Common myeloid progenitor, CD34-positive (primary cell): ENCODE measurements at regions of chr2 and their contacts with region 1.

Region 1: DNA sequence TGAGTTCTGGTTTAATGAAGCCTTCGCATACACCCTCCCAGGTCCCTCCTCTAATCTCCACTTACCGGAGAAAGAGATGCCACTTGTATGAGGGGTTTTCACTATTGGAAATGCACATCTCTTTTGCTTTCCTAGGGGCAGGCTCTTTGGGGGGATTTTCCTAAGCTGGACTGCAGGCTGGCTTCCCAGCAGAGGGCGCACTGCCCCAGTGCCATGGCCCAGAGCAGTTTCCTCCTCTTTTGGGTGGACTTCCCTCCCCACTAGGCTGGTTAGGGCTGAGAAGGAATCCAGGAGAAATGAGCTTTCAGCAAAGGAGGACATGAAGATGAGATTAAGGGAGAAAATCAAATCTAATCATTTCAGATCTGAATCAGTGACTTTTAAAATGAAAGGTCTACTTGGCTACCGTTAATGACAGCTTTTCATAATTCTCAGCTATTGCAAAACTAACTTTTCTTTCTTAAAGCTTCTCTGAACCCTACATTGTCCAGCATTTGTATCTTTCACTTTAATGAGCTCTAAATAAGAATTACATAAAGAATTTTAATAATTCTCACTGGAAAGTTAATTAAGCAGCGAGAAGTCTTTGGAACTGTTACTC is 784.1 kb upstream of the FANCL start:
- DNase-seq: peak; percentile 61 to 67 (median 63)
- H3K4me3 ChIP-seq: peak overlapping the region in 3 of 7 experiments; percentile 5 to 59 (median 25)
- H3K27ac ChIP-seq: peak overlapping the region in 1 of 2 experiments; percentile 32
- H3K4me1 ChIP-seq: peaks cover 0 to 16% (median 4%) of the 10 kb centered on the region in 4 experiments
- H3K27me3 ChIP-seq: no peaks in the 10 kb centered on the region

Region 2: GRCh38 chr2:59044736-59045135 is 19.5 kb after region 1 on chr2:
- CTCF ChIA-PET with region 1: interaction called, 11 read pairs
- POLR2A ChIA-PET with region 1: interaction called, 4 read pairs
- DNase-seq: peak in 2 of 3 donors; percentile 50 to 67
- H3K4me3 ChIP-seq: no peak overlapping the region
- H3K27ac ChIP-seq: no peak overlapping the region
- H3K4me1 ChIP-seq: peaks cover 3 to 12% (median 8%) of the 10 kb centered on the region in 4 experiments
- H3K27me3 ChIP-seq: no peaks in the 10 kb centered on the region

Region 3: GRCh38 chr2:59182249-59182648 is 157.0 kb after region 1 on chr2:
- CTCF ChIA-PET with region 1: interaction called, 13 read pairs
- POLR2A ChIA-PET with region 1: no interaction called
- DNase-seq: peak; percentile 42 to 53 (median 44)
- H3K4me3 ChIP-seq: no peak overlapping the region
- H3K27ac ChIP-seq: no peak overlapping the region
- H3K4me1 ChIP-seq: peaks cover 4 to 15% (median 8%) of the 10 kb centered on the region in 4 experiments
- H3K27me3 ChIP-seq: no peaks in the 10 kb centered on the region

Region 4: DNA sequence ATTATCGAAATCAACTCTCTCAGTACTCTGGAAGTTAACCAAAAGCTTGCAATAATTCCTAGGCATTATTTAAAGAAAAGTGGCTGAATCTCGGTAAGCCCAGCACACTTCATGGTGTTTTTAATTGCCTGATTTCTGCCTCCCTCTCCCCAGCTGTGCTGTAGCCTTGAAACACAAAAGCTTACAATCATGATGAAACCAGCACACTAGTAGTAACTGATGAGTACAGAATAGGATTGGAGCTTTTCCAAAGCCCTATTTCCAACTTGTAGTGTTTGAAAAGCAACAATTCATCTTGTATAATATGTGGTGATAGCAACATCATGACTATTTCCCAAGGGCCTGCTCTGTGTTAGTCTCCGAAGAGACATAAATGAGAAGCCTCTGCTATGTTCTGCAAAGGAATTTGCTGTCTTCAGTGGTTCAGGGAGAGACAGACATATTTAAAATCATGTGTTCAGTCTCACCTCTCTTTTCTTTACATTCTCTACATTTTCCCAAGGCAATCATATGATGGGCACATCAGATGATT is 513.2 kb after region 1 on chr2:
- CTCF ChIA-PET with region 1: no interaction called
- POLR2A ChIA-PET with region 1: no interaction called
- DNase-seq: no peak
- H3K4me3 ChIP-seq: no peak overlapping the region
- H3K27ac ChIP-seq: no peak overlapping the region
- H3K4me1 ChIP-seq: no peaks in the 10 kb centered on the region
- H3K27me3 ChIP-seq: no peaks in the 10 kb centered on the region